Psoas muscle (tissue), 8 donors: ENCODE measurements at regions of chr14 and their contacts with region 1.

Region 1: GRCh38 chr14:30340495-30340894 is 218.5 kb upstream of the G2E3 start:
- DNase-seq: no peak
- ATAC-seq: no peak
- H3K4me3 ChIP-seq: no peak overlapping the region
- H3K27ac ChIP-seq: no peak overlapping the region
- H3K4me1 ChIP-seq: no peaks in the 10 kb centered on the region
- H3K27me3 ChIP-seq: no peaks in the 10 kb centered on the region
- CTCF ChIP-seq: no peak

Region 2: GRCh38 chr14:30058401-30058800 is 282.1 kb before region 1 on chr14:
- intact Hi-C with region 1: loop called in 1 of 2 experiments (anchors 5 kb)
- DNase-seq: no peak
- ATAC-seq: no peak
- H3K4me3 ChIP-seq: no peak overlapping the region
- H3K27ac ChIP-seq: no peak overlapping the region
- H3K4me1 ChIP-seq: no peaks in the 10 kb centered on the region
- H3K27me3 ChIP-seq: no peaks in the 10 kb centered on the region
- CTCF ChIP-seq: no peak

Region 3: DNA sequence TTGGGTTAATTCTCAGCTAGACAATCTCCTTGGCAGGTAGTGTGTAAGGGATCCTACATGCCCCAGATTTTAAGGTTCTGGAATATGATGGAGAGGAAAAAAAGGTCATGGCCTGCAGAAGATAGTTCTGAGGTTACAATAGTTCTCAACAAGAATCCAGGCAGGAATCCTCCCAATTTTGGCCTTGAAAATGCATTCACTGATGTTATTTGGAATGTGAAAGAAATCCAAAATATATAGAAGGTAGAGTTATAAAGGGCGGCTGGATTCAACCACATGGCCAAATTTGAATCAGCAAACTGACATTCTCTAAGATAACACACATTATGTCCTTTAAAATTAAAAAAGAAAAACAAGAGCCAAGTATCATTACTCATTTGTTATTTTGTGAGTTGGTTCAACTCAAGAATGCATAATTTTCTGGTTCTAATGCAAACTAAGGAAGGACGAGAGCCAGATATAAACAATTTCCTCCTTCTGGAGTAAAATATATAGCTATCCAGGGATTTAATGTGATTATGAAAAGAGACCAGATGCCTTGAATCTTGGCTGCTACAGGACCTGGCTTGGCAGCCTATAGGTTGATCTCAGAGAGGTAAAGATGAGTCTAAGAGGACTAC is 41.5 kb after region 1 on chr14:
- intact Hi-C with region 1: no loop called
- DNase-seq: no peak
- ATAC-seq: no peak
- H3K4me3 ChIP-seq: no peak overlapping the region
- H3K27ac ChIP-seq: no peak overlapping the region
- H3K4me1 ChIP-seq: no peaks in the 10 kb centered on the region
- H3K27me3 ChIP-seq: no peaks in the 10 kb centered on the region
- CTCF ChIP-seq: no peak